Endothelial cell of umbilical vein (primary cell): ENCODE measurements at regions of chr19 and their contacts with region 1.

Region 1: GRCh38 chr19:43463381-43464136 is 1.8 kb downstream of the LYPD3 start:
- DNase-seq: peak; percentile 91
- H3K4me3 ChIP-seq: peak overlapping the region; percentile 52 to 63 (median 58)
- H3K27ac ChIP-seq: no peak overlapping the region
- H3K4me1 ChIP-seq: peaks cover 14% of the 10 kb centered on the region
- H3K27me3 ChIP-seq: no peaks in the 10 kb centered on the region
- CTCF ChIP-seq: no peak
- POLR2A ChIP-seq: no peak

Region 2: DNA sequence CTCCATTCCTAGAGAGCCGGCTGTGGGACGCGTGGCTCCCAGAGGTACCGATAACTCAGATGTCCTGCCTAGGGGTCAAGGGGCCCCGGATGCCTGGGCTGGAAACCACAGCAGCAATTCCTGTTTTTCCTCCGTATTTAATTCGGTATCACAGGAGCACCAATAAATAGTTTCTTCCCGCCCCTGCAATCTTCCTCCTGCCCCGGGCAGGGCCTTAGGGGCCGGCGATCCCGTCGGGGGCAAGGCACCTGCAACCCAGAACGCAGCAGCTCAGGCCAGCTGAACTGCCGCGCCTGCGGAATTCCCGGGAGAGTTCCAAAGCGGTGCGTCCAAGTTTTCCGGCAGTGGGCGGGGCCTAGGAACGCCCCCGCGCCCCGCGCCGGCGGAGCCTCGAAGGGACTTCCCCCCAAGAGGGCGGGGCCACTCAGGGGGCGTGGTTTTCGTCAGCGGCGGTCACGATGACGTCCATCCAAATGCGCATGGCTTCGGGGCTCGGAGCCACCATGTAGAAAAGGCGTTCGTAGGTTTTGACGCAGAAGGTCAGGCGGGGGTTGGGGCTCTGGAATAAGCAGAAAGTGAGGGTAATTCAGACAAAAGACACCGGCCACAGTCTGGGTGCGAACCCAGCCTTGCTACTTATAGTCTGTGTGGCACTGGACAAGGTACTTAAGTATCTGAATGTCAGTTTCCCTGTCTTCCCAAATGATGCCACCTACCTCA is 11.6 kb after region 1 on chr19:
- CTCF ChIA-PET with region 1: interaction called, 6 read pairs
- POLR2A ChIA-PET with region 1: no interaction called
- dilution Hi-C with region 1: no loop called
- intact Hi-C with region 1: loop called (anchors 1 kb)
- DNase-seq: peak; percentile 95
- H3K4me3 ChIP-seq: peak overlapping the region; percentile 30 to 51 (median 44)
- H3K27ac ChIP-seq: peak overlapping the region; percentile 76
- H3K4me1 ChIP-seq: peaks cover 11% of the 10 kb centered on the region
- H3K27me3 ChIP-seq: no peaks in the 10 kb centered on the region
- CTCF ChIP-seq: no peak
- POLR2A ChIP-seq: peak; percentile 52

Region 3: DNA sequence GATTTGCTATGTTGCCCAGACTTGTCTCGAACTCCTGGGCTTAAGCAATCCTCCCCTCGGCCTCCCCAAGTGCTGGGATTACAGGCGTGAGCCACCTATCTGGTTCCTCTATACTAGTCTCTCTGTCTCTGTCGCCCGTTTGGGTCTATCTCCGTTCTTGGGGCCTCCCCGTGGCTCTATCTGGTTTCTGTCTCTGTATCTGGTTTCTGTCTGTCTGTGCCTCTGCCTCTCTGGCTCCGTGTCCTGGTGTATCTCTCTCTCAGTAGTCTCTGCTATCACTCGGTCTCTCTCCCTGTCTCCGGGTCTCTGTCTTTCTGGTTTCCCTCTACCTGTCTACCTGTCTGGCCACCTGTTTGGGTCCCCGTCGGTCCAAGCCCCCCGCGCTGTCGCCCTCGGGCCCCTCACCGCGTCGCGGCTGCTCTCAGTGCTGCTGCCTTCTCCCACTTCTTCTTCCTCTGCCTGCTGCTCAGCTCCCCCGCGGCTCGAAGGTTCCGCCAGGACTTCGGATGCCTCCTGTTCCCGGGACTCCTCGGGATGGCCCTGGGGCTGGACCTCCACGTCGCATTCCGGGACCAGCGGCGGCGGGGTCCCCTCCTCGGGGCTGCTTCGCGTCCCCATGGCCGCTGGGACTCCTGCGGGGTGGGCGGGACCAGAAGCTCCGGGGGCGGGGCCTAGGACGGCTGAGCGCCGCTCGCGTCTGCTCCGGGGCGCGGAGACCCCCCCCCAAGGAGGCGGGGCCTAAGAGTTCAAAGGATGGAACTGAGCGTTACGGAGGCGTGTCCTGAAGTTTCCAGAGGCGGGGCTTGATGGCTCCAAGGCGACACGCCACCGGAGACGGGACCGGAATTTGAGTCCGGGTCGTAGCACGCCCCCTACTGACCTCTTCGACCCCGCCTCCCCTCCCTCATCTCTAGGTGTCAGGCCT is 40.2 kb after region 1 on chr19:
- CTCF ChIA-PET with region 1: interaction called, 8 read pairs
- POLR2A ChIA-PET with region 1: no interaction called
- dilution Hi-C with region 1: no loop called
- intact Hi-C with region 1: loop called (anchors 1 kb)
- DNase-seq: peak; percentile 95
- H3K4me3 ChIP-seq: peak overlapping the region; percentile 42 to 66 (median 49)
- H3K27ac ChIP-seq: peak overlapping the region; percentile 31
- H3K4me1 ChIP-seq: peaks cover 11% of the 10 kb centered on the region
- H3K27me3 ChIP-seq: no peaks in the 10 kb centered on the region
- CTCF ChIP-seq: peak in 1 of 2 donors; percentile 16
- POLR2A ChIP-seq: no peak

Region 4: GRCh38 chr19:43526884-43527859 is 63.6 kb after region 1 on chr19 and contains the start of gene ETHE1:
- CTCF ChIA-PET with region 1: interaction called, 3 read pairs
- POLR2A ChIA-PET with region 1: no interaction called
- dilution Hi-C with region 1: no loop called
- intact Hi-C with region 1: loop called (anchors 5 kb)
- DNase-seq: peak; percentile 72
- H3K4me3 ChIP-seq: peak within 1 kb of the TSS; percentile 82 to 97 (median 83)
- H3K27ac ChIP-seq: peak within 1 kb of the TSS; percentile 16
- H3K4me1 ChIP-seq: peaks cover 15% of the 10 kb centered on the region
- H3K27me3 ChIP-seq: no peaks in the 10 kb centered on the region
- CTCF ChIP-seq: no peak
- POLR2A ChIP-seq: peak; percentile 95
- total RNA-seq, gene ETHE1: 29.4 and 34.5 TPM in 2 replicates